ENCODE measurements at regions of chr15 and their contacts with region 1.

Region 1: GRCh38 chr15:45544266-45545023 is 21.9 kb upstream of the SLC30A4 start:
- DNase-seq: no peak
- ATAC-seq: no peak
- H3K4me3 ChIP-seq: no peak overlapping the region
- H3K27ac ChIP-seq: no peak overlapping the region
- H3K4me1 ChIP-seq: no peaks in the 10 kb centered on the region
- H3K27me3 ChIP-seq: no peaks in the 10 kb centered on the region
- CTCF ChIP-seq: no peak

Region 2: DNA sequence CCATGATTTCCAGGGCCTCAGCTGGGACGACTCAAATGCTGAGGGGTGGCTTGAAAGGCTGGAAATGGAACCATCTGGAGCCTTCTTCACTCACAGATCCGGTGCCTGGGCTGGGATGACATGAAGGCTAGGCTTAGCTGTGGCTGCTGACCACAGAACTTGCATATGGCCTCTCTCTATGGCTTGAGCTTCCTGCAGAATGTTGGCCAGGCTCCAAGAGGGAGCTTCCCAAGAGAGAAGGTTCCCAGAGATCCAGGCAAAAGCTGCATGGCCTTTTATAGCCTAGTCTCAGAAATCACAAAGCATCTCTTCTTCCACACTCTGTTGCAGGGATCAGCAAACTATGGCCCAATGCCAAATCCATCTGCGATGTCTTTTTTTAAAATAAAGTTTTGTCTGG is 210.9 kb before region 1 on chr15:
- CTCF ChIA-PET with region 1: no interaction called
- POLR2A ChIA-PET with region 1: interaction called, 11 read pairs
- in situ Hi-C with region 1: no loop called
- intact Hi-C with region 1: no loop called
- DNase-seq: no peak
- ATAC-seq: 0 out of 2 replicates have a peak, but pooled peaks have one; percentile 30
- H3K4me3 ChIP-seq: no peak overlapping the region
- H3K27ac ChIP-seq: no peak overlapping the region
- H3K4me1 ChIP-seq: no peaks in the 10 kb centered on the region
- H3K27me3 ChIP-seq: no peaks in the 10 kb centered on the region; the same call in 1 of the 2 replicates
- CTCF ChIP-seq: no peak

Region 3: GRCh38 chr15:45372041-45372995 is 172.1 kb before region 1 on chr15:
- CTCF ChIA-PET with region 1: no interaction called
- POLR2A ChIA-PET with region 1: no interaction called
- in situ Hi-C with region 1: no loop called
- intact Hi-C with region 1: no loop called
- DNase-seq: no peak
- ATAC-seq: no peak
- H3K4me3 ChIP-seq: no peak overlapping the region
- H3K27ac ChIP-seq: no peak overlapping the region
- H3K4me1 ChIP-seq: no peaks in the 10 kb centered on the region
- H3K27me3 ChIP-seq: peaks cover 21% of the 10 kb centered on the region
- CTCF ChIP-seq: no peak

Region 4: GRCh38 chr15:45495588-45495987 is 48.9 kb before region 1 on chr15:
- CTCF ChIA-PET with region 1: no interaction called
- POLR2A ChIA-PET with region 1: no interaction called
- in situ Hi-C with region 1: no loop called
- intact Hi-C with region 1: no loop called
- DNase-seq: no peak
- ATAC-seq: no peak
- H3K4me3 ChIP-seq: no peak overlapping the region
- H3K27ac ChIP-seq: no peak overlapping the region
- H3K4me1 ChIP-seq: no peaks in the 10 kb centered on the region
- H3K27me3 ChIP-seq: no peaks in the 10 kb centered on the region
- CTCF ChIP-seq: no peak

Region 5: GRCh38 chr15:45842151-45842550 is 297.7 kb after region 1 on chr15:
- CTCF ChIA-PET with region 1: no interaction called
- POLR2A ChIA-PET with region 1: interaction called, 14 read pairs
- in situ Hi-C with region 1: no loop called
- intact Hi-C with region 1: no loop called
- DNase-seq: no peak
- ATAC-seq: no peak
- H3K4me3 ChIP-seq: no peak overlapping the region
- H3K27ac ChIP-seq: no peak overlapping the region
- H3K4me1 ChIP-seq: no peaks in the 10 kb centered on the region
- H3K27me3 ChIP-seq: no peaks in the 10 kb centered on the region
- CTCF ChIP-seq: no peak

Measured in Panc1 (cell line).